ENCODE measurements at regions of chr7 and their contacts with region 1.

Region 1: GRCh38 chr7:71733107-71733870 is 601.3 kb downstream of the GALNT17 start:
- DNase-seq: peak; percentile 63 to 82
- ATAC-seq: peak; percentile 69 to 89 (median 82)
- H3K4me3 ChIP-seq: peak overlapping the region in 8 of 10 donors; percentile 17 to 42 (median 39)
- H3K27ac ChIP-seq: no peak overlapping the region
- H3K4me1 ChIP-seq: peaks cover 0 to 4% (median 0%) of the 10 kb centered on the region in 9 donors
- H3K27me3 ChIP-seq: peaks cover 0 to 3% (median 0%) of the 10 kb centered on the region in 7 donors
- CTCF ChIP-seq: peak; percentile 75 to 96 (median 91)

Region 2: DNA sequence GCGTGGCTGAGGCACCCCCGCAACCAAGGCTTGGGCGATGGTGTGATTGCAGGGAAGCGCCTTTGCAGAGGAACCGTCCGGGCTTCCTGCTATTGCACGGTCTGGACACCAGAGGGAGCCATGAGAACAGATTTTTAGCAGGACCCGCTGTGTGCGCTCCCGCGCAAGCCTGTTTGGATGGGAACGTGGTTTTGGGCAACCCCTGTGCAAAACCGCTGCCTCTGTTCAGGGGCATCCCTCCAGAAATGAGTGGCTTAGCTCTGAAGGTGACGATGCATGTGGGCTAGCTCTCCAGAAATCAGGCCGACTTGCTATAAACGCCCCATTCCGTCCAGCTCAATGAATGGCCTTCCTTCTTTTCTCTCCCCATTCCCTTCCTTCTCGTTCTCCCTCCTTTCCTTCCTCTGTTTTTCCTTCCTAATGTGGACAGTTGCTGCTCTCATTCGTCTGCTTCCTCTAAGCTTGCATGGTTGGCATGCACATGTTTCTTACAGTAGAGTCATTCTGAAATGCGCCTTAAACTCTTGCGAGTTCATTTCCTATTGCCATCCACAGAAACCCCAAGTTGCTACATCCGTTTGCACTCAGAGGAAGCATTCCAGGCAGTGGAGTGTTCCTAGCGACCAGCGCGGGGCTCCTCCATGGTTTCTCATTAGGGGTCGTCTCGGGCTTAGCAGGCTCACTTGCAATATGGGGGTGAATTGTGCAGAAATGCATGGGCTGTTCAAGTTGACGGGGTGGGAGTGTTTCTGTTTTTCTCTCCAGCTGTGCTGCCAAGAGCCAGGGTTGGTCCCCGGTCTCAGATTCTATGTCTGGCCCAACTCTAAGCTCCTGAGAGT is 903.8 kb before region 1 on chr7:
- intact Hi-C with region 1: loop called in 8 of 10 experiments (anchors 1 to 10 kb)
- DNase-seq: peak; percentile 57 to 63
- ATAC-seq: peak in 7 of 8 donors; percentile 58 to 81 (median 68)
- H3K4me3 ChIP-seq: peak overlapping the region in 4 of 10 donors; percentile 5 to 36 (median 21)
- H3K27ac ChIP-seq: no peak overlapping the region
- H3K4me1 ChIP-seq: peaks cover 0 to 9% (median 4%) of the 10 kb centered on the region in 9 donors
- H3K27me3 ChIP-seq: peaks cover 0 to 48% (median 10%) of the 10 kb centered on the region in 7 donors
- CTCF ChIP-seq: peak; percentile 36 to 93 (median 88)

Region 3: GRCh38 chr7:70856866-70857630 is 876.2 kb before region 1 on chr7:
- intact Hi-C with region 1: loop called (anchors 1 to 5 kb)
- DNase-seq: peak; percentile 46 to 65
- ATAC-seq: no peak
- H3K4me3 ChIP-seq: no peak overlapping the region
- H3K27ac ChIP-seq: no peak overlapping the region
- H3K4me1 ChIP-seq: no peaks in the 10 kb centered on the region
- H3K27me3 ChIP-seq: peaks cover 0 to 12% (median 0%) of the 10 kb centered on the region in 7 donors
- CTCF ChIP-seq: peak; percentile 80 to 97 (median 89)

Region 4: GRCh38 chr7:71131256-71132126 is 601.8 kb before region 1 on chr7:
- intact Hi-C with region 1: loop called in 2 of 10 experiments (anchors 10 kb)
- DNase-seq: peak; percentile 27 to 56
- ATAC-seq: peak; percentile 78 to 92 (median 84)
- H3K4me3 ChIP-seq: peak overlapping the region; percentile 52 to 70 (median 60)
- H3K27ac ChIP-seq: peak overlapping the region; percentile 40 to 91 (median 82)
- H3K4me1 ChIP-seq: peaks cover 0 to 9% (median 0%) of the 10 kb centered on the region in 9 donors
- H3K27me3 ChIP-seq: peaks cover 6 to 40% (median 31%) of the 10 kb centered on the region in 7 donors
- CTCF ChIP-seq: peak in 4 of 9 donors; percentile 14 to 47 (median 39)

Region 5: GRCh38 chr7:71237945-71238344 is 495.3 kb before region 1 on chr7:
- intact Hi-C with region 1: loop called in 2 of 10 experiments (anchors 10 kb)
- DNase-seq: peak; percentile 17 to 46
- ATAC-seq: peak; percentile 65 to 94 (median 86)
- H3K4me3 ChIP-seq: no peak overlapping the region
- H3K27ac ChIP-seq: peak overlapping the region in 9 of 10 donors; percentile 47 to 90 (median 85)
- H3K4me1 ChIP-seq: peaks cover 0 to 41% (median 27%) of the 10 kb centered on the region in 9 donors
- H3K27me3 ChIP-seq: no peaks in the 10 kb centered on the region
- CTCF ChIP-seq: peak in 8 of 9 donors; percentile 8 to 57 (median 26)

Region 6: GRCh38 chr7:71266912-71267311 is 466.4 kb before region 1 on chr7:
- intact Hi-C with region 1: loop called in 1 of 10 experiments (anchors 10 kb)
- DNase-seq: no peak
- ATAC-seq: no peak
- H3K4me3 ChIP-seq: no peak overlapping the region
- H3K27ac ChIP-seq: no peak overlapping the region
- H3K4me1 ChIP-seq: peaks cover 0 to 24% (median 0%) of the 10 kb centered on the region in 9 donors
- H3K27me3 ChIP-seq: no peaks in the 10 kb centered on the region
- CTCF ChIP-seq: no peak

Region 7: DNA sequence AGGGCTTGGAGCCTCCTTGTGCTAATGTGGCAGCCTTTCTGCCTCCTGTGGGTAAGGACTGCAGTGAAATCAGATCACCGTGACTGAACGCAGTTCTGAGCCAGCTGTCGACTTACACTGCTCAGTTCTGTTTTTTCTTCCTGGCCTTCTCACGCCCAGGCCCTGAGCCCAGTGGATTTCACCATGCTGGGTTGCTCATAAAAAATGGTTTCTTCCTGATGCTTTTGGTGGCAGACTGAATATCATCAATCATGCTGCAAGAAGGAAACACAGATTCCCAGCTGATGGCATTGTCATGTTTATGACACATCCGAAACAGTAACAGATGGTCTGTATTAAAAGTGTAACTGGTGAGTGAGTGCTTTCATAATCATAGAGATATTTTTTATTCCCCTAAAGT is 211.8 kb before region 1 on chr7:
- intact Hi-C with region 1: loop called in 1 of 10 experiments (anchors 10 kb)
- DNase-seq: no peak
- ATAC-seq: peak in 1 of 8 donors; percentile 63
- H3K4me3 ChIP-seq: no peak overlapping the region
- H3K27ac ChIP-seq: no peak overlapping the region
- H3K4me1 ChIP-seq: no peaks in the 10 kb centered on the region
- H3K27me3 ChIP-seq: no peaks in the 10 kb centered on the region
- CTCF ChIP-seq: no peak

Region 8: DNA sequence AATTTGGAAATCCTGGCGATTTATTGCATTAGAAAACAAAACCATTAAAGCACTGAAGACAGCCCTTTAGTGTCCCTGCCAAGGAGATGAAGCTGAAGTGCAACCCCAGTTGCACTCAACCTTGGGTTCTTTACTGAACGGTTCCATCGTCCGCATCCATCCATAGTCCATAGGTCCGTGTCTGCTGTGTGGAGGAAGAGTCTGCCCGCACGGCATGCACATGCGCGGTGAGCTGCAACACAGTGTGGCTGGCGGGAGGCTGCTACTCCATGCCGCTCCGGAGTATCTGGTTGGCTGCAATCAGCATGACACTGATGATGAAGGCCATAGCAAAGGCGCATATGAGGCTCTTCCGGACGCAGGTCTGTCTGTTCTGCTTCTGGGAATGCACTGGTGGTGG is 54.2 kb after region 1 on chr7:
- intact Hi-C with region 1: no loop called
- DNase-seq: no peak
- ATAC-seq: no peak
- H3K4me3 ChIP-seq: no peak overlapping the region
- H3K27ac ChIP-seq: no peak overlapping the region
- H3K4me1 ChIP-seq: no peaks in the 10 kb centered on the region
- H3K27me3 ChIP-seq: peaks cover 0 to 3% (median 0%) of the 10 kb centered on the region in 7 donors
- CTCF ChIP-seq: no peak

Region 9: GRCh38 chr7:71900556-71900955 is 167.3 kb after region 1 on chr7:
- intact Hi-C with region 1: no loop called
- DNase-seq: no peak
- ATAC-seq: no peak
- H3K4me3 ChIP-seq: no peak overlapping the region
- H3K27ac ChIP-seq: no peak overlapping the region
- H3K4me1 ChIP-seq: no peaks in the 10 kb centered on the region
- H3K27me3 ChIP-seq: peaks cover 0 to 2% (median 0%) of the 10 kb centered on the region in 7 donors
- CTCF ChIP-seq: no peak

Measured in heart right ventricle (tissue), 16 donors.